CD4-positive, alpha-beta T cell (primary cell): ENCODE measurements at regions of chr12 and their contacts with region 1.

Region 1: DNA sequence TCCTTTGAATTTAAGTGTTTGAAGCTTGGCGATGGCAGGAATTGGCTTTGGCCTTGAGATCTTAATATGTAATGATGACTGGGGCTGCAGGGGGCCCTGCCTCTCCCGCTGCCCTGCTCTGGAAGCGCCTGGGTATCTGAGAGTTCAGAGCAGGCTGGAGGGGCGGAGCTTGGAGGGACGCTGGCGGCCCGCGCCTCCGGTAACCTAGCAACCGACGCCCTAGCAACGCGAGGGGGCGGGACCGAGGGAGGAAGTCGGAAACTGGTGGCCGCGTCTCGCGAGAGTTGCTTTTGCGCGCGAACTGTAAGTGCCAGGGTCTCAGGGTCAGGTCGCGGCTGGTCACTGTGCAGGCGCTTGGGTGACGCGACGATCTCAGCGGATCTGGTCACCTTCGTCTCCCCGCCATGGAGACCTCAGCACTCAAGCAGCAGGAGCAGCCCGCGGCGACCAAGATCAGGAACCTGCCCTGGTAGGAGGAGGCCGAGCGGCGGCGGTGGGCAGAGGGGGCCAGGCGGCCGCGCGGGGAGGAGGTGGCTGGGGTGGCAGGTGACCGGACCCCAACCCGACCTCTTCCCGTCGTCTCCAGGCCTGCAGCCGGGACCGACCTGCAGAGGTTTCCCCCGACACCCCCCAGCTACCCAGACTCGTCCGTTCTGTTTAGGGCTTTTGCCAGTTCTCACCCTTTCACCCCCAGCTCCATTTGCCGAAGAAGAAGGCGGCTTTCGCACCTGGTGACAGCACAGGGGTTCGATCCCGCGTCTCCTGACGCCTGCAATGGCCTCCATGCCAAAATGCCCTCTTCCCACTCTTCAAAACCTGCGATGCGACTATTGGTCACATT is at the start of gene RFC5:
- DNase-seq: peak; percentile 94 to 99 (median 97)
- ATAC-seq: peak; percentile 98
- H3K4me3 ChIP-seq: peak within 1 kb of the TSS; percentile 85
- H3K4me3 Mint-ChIP-seq: peak within 1 kb of the TSS; percentile 90
- H3K27ac ChIP-seq: peak within 1 kb of the TSS; percentile 11 to 16
- H3K27ac Mint-ChIP-seq: peak within 1 kb of the TSS; percentile 77
- H3K4me1 ChIP-seq: peaks cover 17% of the 10 kb centered on the region
- H3K4me1 Mint-ChIP-seq: peaks cover 21% of the 10 kb centered on the region
- H3K27me3 ChIP-seq: no peaks in the 10 kb centered on the region
- H3K27me3 Mint-ChIP-seq: no peaks in the 10 kb centered on the region
- CTCF ChIP-seq: no peak
- total RNA-seq, gene RFC5: 8.7 to 9.1 TPM

Region 2: DNA sequence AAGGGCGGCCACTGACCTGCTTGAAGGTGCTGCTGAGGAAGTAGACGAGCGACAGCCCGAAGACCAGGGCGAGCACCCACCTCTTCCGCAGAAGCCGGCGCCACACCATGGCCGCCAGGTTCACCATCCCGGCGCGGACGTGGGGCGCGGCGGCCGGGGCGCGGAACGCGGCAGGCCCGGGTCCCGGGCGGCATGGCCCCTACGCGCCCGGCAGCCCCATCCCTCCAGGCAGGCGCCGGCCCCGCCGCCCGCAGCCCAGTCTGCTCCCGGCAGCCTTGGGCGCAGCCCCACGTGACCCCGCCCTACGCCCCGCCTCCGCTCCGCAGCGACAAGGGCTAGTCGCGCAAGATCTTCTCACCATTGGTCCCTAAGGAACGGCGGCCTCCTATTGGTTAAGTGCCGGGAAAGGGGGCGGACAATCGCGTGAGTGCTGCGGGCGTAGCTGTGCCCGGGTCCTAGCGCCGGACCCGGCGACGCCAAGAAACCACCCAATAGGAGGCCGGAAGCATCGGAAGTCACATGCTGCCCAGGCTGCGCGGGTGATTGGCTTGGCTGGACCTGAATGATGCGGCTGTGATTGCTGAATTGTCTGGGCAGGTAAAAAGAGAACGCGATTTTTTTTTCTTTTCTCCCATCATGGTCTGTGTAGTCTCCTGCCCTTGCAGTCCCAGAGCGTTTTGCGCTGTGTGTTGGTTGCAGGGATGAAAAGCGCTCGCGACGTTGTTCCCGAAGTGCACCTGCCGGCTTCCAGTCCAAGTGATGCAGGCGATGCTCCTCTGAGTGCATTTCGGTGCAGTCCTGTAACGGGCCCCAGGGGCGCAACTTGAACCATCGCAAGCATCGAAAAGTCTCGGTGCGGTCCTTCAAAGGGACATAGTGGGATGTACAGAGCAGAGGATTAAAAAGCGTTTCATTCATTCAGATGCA is 1278.6 kb before region 1 on chr12 and contains the starts of genes RNFT2 and SPRING1:
- CTCF ChIA-PET with region 1: no interaction called
- POLR2A ChIA-PET with region 1: no interaction called
- intact Hi-C with region 1: loop called in 1 of 2 experiments (anchors 10 kb)
- DNase-seq: peak; percentile 96 to 100 (median 98)
- ATAC-seq: peak; percentile 96
- H3K4me3 ChIP-seq: peak within 1 kb of the TSS; percentile 87
- H3K4me3 Mint-ChIP-seq: peak within 1 kb of the TSS; percentile 96
- H3K27ac ChIP-seq: peak within 1 kb of the TSS; percentile 27 to 39
- H3K27ac Mint-ChIP-seq: peak within 1 kb of the TSS; percentile 86
- H3K4me1 ChIP-seq: peaks cover 27% of the 10 kb centered on the region
- H3K4me1 Mint-ChIP-seq: peaks cover 35% of the 10 kb centered on the region
- H3K27me3 ChIP-seq: no peaks in the 10 kb centered on the region
- H3K27me3 Mint-ChIP-seq: no peaks in the 10 kb centered on the region
- CTCF ChIP-seq: no peak
- total RNA-seq, gene RNFT2: 4.9 to 6.0 TPM
- total RNA-seq, gene SPRING1: 7.6 to 7.8 TPM

Region 3: DNA sequence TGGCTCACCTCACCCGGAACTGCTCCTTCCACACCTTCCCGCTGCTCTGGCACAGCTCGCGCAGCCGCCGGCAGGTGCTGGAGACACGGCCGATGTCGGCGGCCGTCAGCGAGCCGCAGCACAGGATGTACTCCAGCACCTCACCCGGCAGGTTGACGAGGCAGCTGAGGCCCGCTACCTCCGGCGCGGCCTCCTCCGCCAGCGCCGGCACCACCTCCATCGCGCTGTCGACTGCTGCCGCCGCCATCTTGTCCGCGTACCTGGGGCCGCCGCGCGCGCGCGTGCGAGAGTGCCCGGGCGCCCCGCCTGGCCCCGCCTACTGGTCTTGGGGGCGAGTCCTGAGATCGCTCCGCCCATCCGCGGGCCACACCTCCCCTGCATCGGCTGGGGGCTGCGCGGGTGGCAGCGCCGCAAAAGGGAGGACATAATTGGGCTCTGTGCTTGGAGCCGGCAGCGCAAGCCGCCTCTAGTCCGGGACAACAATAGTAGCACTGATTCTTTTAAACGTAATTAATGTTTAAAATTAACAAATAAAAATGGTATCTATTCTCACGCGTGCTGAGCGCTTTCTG is 826.3 kb before region 1 on chr12 and contains the start of gene FBXO21:
- CTCF ChIA-PET with region 1: no interaction called
- POLR2A ChIA-PET with region 1: no interaction called
- intact Hi-C with region 1: loop called in 1 of 2 experiments (anchors 5 kb)
- DNase-seq: peak; percentile 89 to 97 (median 94)
- ATAC-seq: peak; percentile 91
- H3K4me3 ChIP-seq: peak within 1 kb of the TSS; percentile 91
- H3K4me3 Mint-ChIP-seq: peak within 1 kb of the TSS; percentile 94
- H3K27ac ChIP-seq: peak within 1 kb of the TSS in 1 of 2 donors; percentile 44
- H3K27ac Mint-ChIP-seq: peak within 1 kb of the TSS; percentile 91
- H3K4me1 ChIP-seq: peaks cover 19% of the 10 kb centered on the region
- H3K4me1 Mint-ChIP-seq: peaks cover 44% of the 10 kb centered on the region
- H3K27me3 ChIP-seq: no peaks in the 10 kb centered on the region
- H3K27me3 Mint-ChIP-seq: no peaks in the 10 kb centered on the region
- CTCF ChIP-seq: no peak
- total RNA-seq, gene FBXO21: 67.7 to 67.9 TPM

Region 4: GRCh38 chr12:118120579-118121363 is 104.1 kb after region 1 on chr12:
- CTCF ChIA-PET with region 1: no interaction called
- POLR2A ChIA-PET with region 1: no interaction called
- intact Hi-C with region 1: loop called in 1 of 2 experiments (anchors 5 kb)
- DNase-seq: peak; percentile 35 to 81 (median 54)
- ATAC-seq: peak; percentile 67
- H3K4me3 ChIP-seq: no peak overlapping the region
- H3K4me3 Mint-ChIP-seq: no peak overlapping the region
- H3K27ac ChIP-seq: peak overlapping the region in 1 of 2 donors; percentile 6
- H3K27ac Mint-ChIP-seq: peak overlapping the region; percentile 62
- H3K4me1 ChIP-seq: peaks cover 6% of the 10 kb centered on the region
- H3K4me1 Mint-ChIP-seq: peaks cover 11% of the 10 kb centered on the region
- H3K27me3 ChIP-seq: no peaks in the 10 kb centered on the region
- H3K27me3 Mint-ChIP-seq: no peaks in the 10 kb centered on the region
- CTCF ChIP-seq: peak; percentile 82

Region 5: GRCh38 chr12:119667577-119668323 is 1651.1 kb after region 1 on chr12 and contains the start of gene PRKAB1:
- CTCF ChIA-PET with region 1: interaction called, 3 read pairs
- POLR2A ChIA-PET with region 1: no interaction called
- intact Hi-C with region 1: loop called in 1 of 2 experiments (anchors 2 kb)
- DNase-seq: peak; percentile 87 to 99 (median 94)
- ATAC-seq: peak; percentile 88
- H3K4me3 ChIP-seq: peak within 1 kb of the TSS; percentile 90
- H3K4me3 Mint-ChIP-seq: peak within 1 kb of the TSS; percentile 92
- H3K27ac ChIP-seq: peak within 1 kb of the TSS; percentile 80 to 91
- H3K27ac Mint-ChIP-seq: peak within 1 kb of the TSS; percentile 93
- H3K4me1 ChIP-seq: peaks cover 24% of the 10 kb centered on the region
- H3K4me1 Mint-ChIP-seq: peaks cover 57% of the 10 kb centered on the region
- H3K27me3 ChIP-seq: no peaks in the 10 kb centered on the region
- H3K27me3 Mint-ChIP-seq: no peaks in the 10 kb centered on the region
- CTCF ChIP-seq: peak; percentile 96
- total RNA-seq, gene PRKAB1: 18.6 to 24.2 TPM